ENCODE measurements at regions of chr10 and their contacts with region 1.

Region 1: GRCh38 chr10:7818295-7819122 is at the start of gene TAF3:
- DNase-seq: peak; percentile 83
- ATAC-seq: peak; percentile 71
- H3K4me3 ChIP-seq: peak within 1 kb of the TSS; percentile 86
- H3K27ac ChIP-seq: no peak within 1 kb of the TSS
- H3K4me1 ChIP-seq: peaks cover 8% of the 10 kb centered on the region; the same call in 1 of the 2 replicates
- H3K27me3 ChIP-seq: no peaks in the 10 kb centered on the region
- CTCF ChIP-seq: no peak
- total RNA-seq, gene TAF3: 1.2 and 2.0 TPM in 2 replicates

Region 2: GRCh38 chr10:7787857-7788638 is 30.5 kb before region 1 on chr10 and contains the starts of genes ATP5F1C and KIN:
- CTCF ChIA-PET with region 1: interaction called, 5 read pairs
- POLR2A ChIA-PET with region 1: no interaction called
- intact Hi-C with region 1: loop called (anchors 2 kb)
- DNase-seq: peak; percentile 85
- ATAC-seq: peak; percentile 92
- H3K4me3 ChIP-seq: peak within 1 kb of the TSS; percentile 89
- H3K27ac ChIP-seq: peak within 1 kb of the TSS; percentile 46
- H3K4me1 ChIP-seq: peaks cover 17% of the 10 kb centered on the region
- H3K27me3 ChIP-seq: no peaks in the 10 kb centered on the region
- CTCF ChIP-seq: no peak
- total RNA-seq, gene ATP5F1C: 167 and 177 TPM in 2 replicates
- total RNA-seq, gene KIN: 2.4 and 7.3 TPM in 2 replicates

Region 3: DNA sequence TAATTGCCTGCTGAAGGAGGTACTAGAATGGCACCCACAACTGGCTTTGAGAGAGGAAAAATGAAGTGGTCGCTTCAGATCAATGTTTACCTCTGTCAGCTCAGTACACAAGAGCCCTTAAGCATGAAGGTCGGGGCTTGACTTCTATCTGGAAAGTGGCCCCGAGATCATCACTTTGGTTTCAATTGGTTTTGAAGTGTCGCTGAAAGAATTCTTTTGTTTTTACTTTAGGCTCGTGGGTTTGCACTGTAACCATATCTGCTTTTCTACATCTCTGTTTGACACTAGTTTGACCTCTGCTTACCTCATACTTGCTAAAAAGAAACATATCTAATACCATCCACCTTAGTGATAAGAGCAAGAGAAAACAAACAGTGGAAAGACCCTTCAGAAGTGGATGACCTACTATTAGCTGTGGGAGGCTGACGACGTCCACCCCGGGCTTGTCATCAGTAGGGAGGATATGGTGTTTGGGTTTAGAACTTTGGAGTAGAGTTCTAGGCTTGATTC is 597.7 kb after region 1 on chr10:
- CTCF ChIA-PET with region 1: no interaction called
- POLR2A ChIA-PET with region 1: no interaction called
- intact Hi-C with region 1: no loop called
- DNase-seq: no peak
- ATAC-seq: no peak
- H3K4me3 ChIP-seq: no peak overlapping the region
- H3K27ac ChIP-seq: no peak overlapping the region
- H3K4me1 ChIP-seq: no peaks in the 10 kb centered on the region
- H3K27me3 ChIP-seq: no peaks in the 10 kb centered on the region
- CTCF ChIP-seq: no peak

Measured in PC-3 (cell line).